IMR-90 (cell line): ENCODE measurements at regions of chr13 and their contacts with region 1.

Region 1: GRCh38 chr13:31012655-31013024 is 80.2 kb downstream of the TEX26 start:
- DNase-seq: peak; percentile 46
- ATAC-seq: no peak
- H3K4me3 ChIP-seq: no peak overlapping the region
- H3K27ac ChIP-seq: no peak overlapping the region
- H3K4me1 ChIP-seq: no peaks in the 10 kb centered on the region; the same call in 1 of the 2 replicates
- H3K27me3 ChIP-seq: no peaks in the 10 kb centered on the region; the same call in 1 of the 2 replicates
- CTCF ChIP-seq: peak; percentile 60
- POLR2A ChIP-seq: no peak
- RAD21 ChIP-seq: peak; percentile 73

Region 2: DNA sequence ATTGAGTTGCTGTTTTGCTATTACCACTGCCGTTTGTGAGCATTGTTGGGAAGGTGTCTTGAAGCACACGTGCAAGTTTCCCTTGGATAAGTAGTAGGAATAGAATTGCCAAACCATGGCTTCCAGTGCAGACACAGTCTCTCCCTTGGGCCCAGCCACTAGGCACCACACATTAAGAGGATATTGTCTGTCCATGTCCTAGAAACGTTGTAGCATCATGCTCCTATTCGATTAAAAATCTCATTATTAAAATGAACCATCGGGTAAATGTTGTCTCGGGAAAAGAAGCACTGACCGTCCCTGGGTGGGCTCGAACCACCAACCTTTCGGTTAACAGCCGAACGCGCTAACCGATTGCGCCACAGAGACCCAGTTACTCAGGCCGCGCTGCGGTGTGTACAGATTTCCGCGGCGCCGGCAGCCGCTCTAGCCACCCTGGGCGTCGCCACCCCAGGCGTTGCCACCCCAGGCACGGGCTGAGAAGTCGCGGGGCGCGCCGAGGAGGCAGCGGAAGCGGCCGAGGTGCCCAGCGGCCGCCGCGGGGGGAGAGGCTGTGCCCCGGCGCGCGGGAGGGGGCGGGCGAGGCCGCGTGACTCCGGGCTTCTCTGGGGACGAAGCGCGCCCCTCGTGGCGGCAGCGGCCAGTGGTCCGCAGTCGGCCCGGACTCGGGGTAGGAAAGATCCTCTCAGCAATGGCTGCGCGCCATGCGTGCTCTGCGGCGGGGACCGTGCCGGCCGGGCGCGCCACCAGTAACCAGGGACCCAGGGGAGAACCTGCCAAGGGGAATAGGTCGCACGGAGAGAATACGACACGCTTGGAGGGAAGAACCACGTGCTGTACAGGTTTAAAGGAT is 338.7 kb before region 1 on chr13:
- CTCF ChIA-PET with region 1: no interaction called
- POLR2A ChIA-PET with region 1: no interaction called
- dilution Hi-C with region 1: no loop called
- in situ Hi-C with region 1: no loop called
- intact Hi-C with region 1: loop called (anchors 10 kb)
- DNase-seq: peak; percentile 89
- ATAC-seq: peak; percentile 91
- H3K4me3 ChIP-seq: peak overlapping the region; percentile 58
- H3K27ac ChIP-seq: peak overlapping the region; percentile 42
- H3K4me1 ChIP-seq: peaks cover 2% of the 10 kb centered on the region
- H3K27me3 ChIP-seq: no peaks in the 10 kb centered on the region
- CTCF ChIP-seq: peak; percentile 77
- POLR2A ChIP-seq: no peak
- RAD21 ChIP-seq: peak; percentile 60

Region 3: GRCh38 chr13:31056644-31057271 is 44.1 kb after region 1 on chr13:
- CTCF ChIA-PET with region 1: no interaction called
- POLR2A ChIA-PET with region 1: no interaction called
- dilution Hi-C with region 1: no loop called
- in situ Hi-C with region 1: no loop called
- intact Hi-C with region 1: no loop called
- DNase-seq: peak; percentile 35
- ATAC-seq: peak; percentile 79
- H3K4me3 ChIP-seq: no peak overlapping the region
- H3K27ac ChIP-seq: no peak overlapping the region
- H3K4me1 ChIP-seq: peaks cover 1% of the 10 kb centered on the region; the same call in 1 of the 2 replicates
- H3K27me3 ChIP-seq: peaks cover 3% of the 10 kb centered on the region
- CTCF ChIP-seq: peak; percentile 21; the same call in 1 of the 2 replicates
- POLR2A ChIP-seq: no peak
- RAD21 ChIP-seq: 0 out of 2 replicates have a peak, but pooled peaks have one; percentile 15